ENCODE measurements at regions of chr21 and their contacts with region 1.

Region 1: GRCh38 chr21:46323227-46324128 is at the start of gene C21orf58:
- DNase-seq: peak; percentile 98
- ATAC-seq: peak; percentile 80
- H3K4me3 ChIP-seq: peak within 1 kb of the TSS; percentile 54 to 100 (median 95)
- H3K4me3 Mint-ChIP-seq: peak within 1 kb of the TSS; percentile 88
- H3K27ac ChIP-seq: peak within 1 kb of the TSS; percentile 95 to 96
- H3K27ac Mint-ChIP-seq: peak within 1 kb of the TSS; percentile 95
- H3K4me1 ChIP-seq: peaks cover 16 to 23% of the 10 kb centered on the region in 2 donors
- H3K4me1 Mint-ChIP-seq: peaks cover 24% of the 10 kb centered on the region
- H3K27me3 ChIP-seq: peaks cover 0 to 3% (median 0%) of the 10 kb centered on the region in 4 experiments
- H3K27me3 Mint-ChIP-seq: no peaks in the 10 kb centered on the region
- CTCF ChIP-seq: no peak
- total RNA-seq, gene C21orf58: 9.3 and 9.5 TPM in 2 replicates

Region 2: DNA sequence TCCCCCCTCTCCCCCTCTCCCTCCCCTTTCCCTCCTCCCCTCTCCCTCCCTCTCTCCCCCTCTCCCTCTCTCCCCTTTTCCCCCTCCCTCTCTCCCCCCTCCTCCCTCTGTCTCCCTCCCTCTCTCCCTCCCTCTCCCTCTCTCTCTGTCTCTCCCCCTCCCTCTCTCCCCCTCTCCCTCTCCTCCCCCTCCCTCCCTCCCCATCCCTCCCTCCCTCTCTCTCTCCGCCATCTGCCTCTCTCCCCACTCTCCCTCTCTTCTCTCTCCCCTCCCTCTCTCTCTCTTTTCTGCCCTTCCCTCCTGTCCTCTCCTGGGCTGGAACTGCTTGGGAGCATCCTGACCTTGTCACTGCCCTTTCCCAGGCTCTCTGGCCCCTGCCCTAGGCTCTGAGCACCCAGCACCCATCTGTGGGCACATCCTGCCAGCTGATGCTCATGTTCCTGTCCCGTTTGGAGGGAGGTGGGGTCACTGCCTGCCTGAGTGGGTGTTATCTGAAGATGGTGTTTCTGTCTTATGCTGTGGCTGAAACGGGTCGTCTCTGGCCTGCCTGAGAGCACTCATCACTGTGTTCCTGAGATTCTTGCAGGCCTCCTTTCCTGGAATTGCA is 178.9 kb before region 1 on chr21:
- CTCF ChIA-PET with region 1: interaction called, 11 read pairs
- POLR2A ChIA-PET with region 1: no interaction called
- intact Hi-C with region 1: loop called (anchors 2 kb)
- DNase-seq: no peak
- ATAC-seq: no peak
- H3K4me3 ChIP-seq: no peak overlapping the region
- H3K4me3 Mint-ChIP-seq: peak overlapping the region; percentile 26
- H3K27ac ChIP-seq: no peak overlapping the region
- H3K27ac Mint-ChIP-seq: peak overlapping the region; percentile 59
- H3K4me1 ChIP-seq: peaks cover 0 to 5% of the 10 kb centered on the region in 2 donors
- H3K4me1 Mint-ChIP-seq: peaks cover 8% of the 10 kb centered on the region
- H3K27me3 ChIP-seq: no peaks in the 10 kb centered on the region
- H3K27me3 Mint-ChIP-seq: no peaks in the 10 kb centered on the region
- CTCF ChIP-seq: no peak

Region 3: GRCh38 chr21:46184625-46185555 is 138.6 kb before region 1 on chr21:
- CTCF ChIA-PET with region 1: no interaction called
- POLR2A ChIA-PET with region 1: no interaction called
- intact Hi-C with region 1: loop called (anchors 1 kb)
- DNase-seq: peak; percentile 91
- ATAC-seq: peak; percentile 84
- H3K4me3 ChIP-seq: peak overlapping the region; percentile 36 to 91 (median 76)
- H3K4me3 Mint-ChIP-seq: peak overlapping the region; percentile 92
- H3K27ac ChIP-seq: peak overlapping the region; percentile 59 to 63
- H3K27ac Mint-ChIP-seq: peak overlapping the region; percentile 90
- H3K4me1 ChIP-seq: peaks cover 0 to 16% of the 10 kb centered on the region in 2 donors
- H3K4me1 Mint-ChIP-seq: peaks cover 9% of the 10 kb centered on the region
- H3K27me3 ChIP-seq: no peaks in the 10 kb centered on the region
- H3K27me3 Mint-ChIP-seq: no peaks in the 10 kb centered on the region
- CTCF ChIP-seq: no peak

Region 4: DNA sequence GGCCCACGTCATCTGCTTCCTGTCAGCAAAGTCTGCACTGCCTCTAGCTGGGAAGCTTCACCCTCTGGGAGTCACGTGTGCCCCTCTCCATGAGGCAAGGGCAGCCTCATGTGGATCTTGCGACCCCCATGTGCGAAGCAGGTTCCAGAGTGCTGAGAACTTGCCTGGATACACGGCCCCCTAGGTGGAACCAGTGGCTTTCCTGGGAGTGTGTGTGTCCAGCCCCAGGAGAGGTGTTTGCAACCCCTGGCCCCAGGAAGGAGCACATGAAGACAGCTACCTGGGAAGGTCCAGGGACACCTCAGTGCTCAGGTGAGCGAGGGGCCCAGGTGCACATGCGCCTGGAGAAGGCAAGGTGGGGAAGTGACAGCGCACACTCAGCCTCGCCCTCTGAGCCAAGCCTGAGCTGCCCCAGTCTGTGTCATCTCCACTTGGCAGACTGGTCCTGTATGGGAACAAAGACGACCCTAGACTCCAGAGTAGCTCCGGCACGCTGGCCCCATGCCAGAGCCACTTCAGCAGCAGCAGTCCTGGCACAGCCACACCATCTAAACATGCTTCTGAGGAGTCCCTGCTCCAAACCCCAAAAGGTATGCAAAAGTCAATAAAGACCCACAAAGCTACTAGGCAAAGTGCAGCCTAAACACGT is 103.8 kb before region 1 on chr21:
- CTCF ChIA-PET with region 1: no interaction called
- POLR2A ChIA-PET with region 1: no interaction called
- intact Hi-C with region 1: no loop called
- DNase-seq: no peak
- ATAC-seq: no peak
- H3K4me3 ChIP-seq: no peak overlapping the region
- H3K4me3 Mint-ChIP-seq: no peak overlapping the region
- H3K27ac ChIP-seq: no peak overlapping the region
- H3K27ac Mint-ChIP-seq: no peak overlapping the region
- H3K4me1 ChIP-seq: no peaks in the 10 kb centered on the region
- H3K4me1 Mint-ChIP-seq: no peaks in the 10 kb centered on the region
- H3K27me3 ChIP-seq: no peaks in the 10 kb centered on the region
- H3K27me3 Mint-ChIP-seq: no peaks in the 10 kb centered on the region
- CTCF ChIP-seq: no peak

Region 5: GRCh38 chr21:46458315-46459023 is 135.0 kb after region 1 on chr21 and contains the start of gene DIP2A:
- CTCF ChIA-PET with region 1: no interaction called
- POLR2A ChIA-PET with region 1: no interaction called
- intact Hi-C with region 1: loop called (anchors 1 kb)
- DNase-seq: peak; percentile 97
- ATAC-seq: peak; percentile 98
- H3K4me3 ChIP-seq: peak within 1 kb of the TSS; percentile 49 to 95 (median 90)
- H3K4me3 Mint-ChIP-seq: peak within 1 kb of the TSS; percentile 93
- H3K27ac ChIP-seq: peak within 1 kb of the TSS; percentile 79 to 89
- H3K27ac Mint-ChIP-seq: peak within 1 kb of the TSS; percentile 89
- H3K4me1 ChIP-seq: peaks cover 16 to 23% of the 10 kb centered on the region in 2 donors
- H3K4me1 Mint-ChIP-seq: peaks cover 29% of the 10 kb centered on the region
- H3K27me3 ChIP-seq: no peaks in the 10 kb centered on the region
- H3K27me3 Mint-ChIP-seq: no peaks in the 10 kb centered on the region
- CTCF ChIP-seq: no peak
- total RNA-seq, gene DIP2A: 59.0 and 61.9 TPM in 2 replicates

Region 6: GRCh38 chr21:46515109-46515508 is 191.6 kb after region 1 on chr21:
- CTCF ChIA-PET with region 1: no interaction called
- POLR2A ChIA-PET with region 1: no interaction called
- intact Hi-C with region 1: no loop called
- DNase-seq: peak; percentile 39
- ATAC-seq: no peak
- H3K4me3 ChIP-seq: no peak overlapping the region
- H3K4me3 Mint-ChIP-seq: no peak overlapping the region
- H3K27ac ChIP-seq: peak overlapping the region; percentile 1 to 48
- H3K27ac Mint-ChIP-seq: no peak overlapping the region
- H3K4me1 ChIP-seq: peaks cover 10 to 11% of the 10 kb centered on the region in 2 donors
- H3K4me1 Mint-ChIP-seq: peaks cover 15% of the 10 kb centered on the region
- H3K27me3 ChIP-seq: no peaks in the 10 kb centered on the region
- H3K27me3 Mint-ChIP-seq: no peaks in the 10 kb centered on the region
- CTCF ChIP-seq: no peak